ENCODE measurements at regions of chr3 and their contacts with region 1.

Region 1: DNA sequence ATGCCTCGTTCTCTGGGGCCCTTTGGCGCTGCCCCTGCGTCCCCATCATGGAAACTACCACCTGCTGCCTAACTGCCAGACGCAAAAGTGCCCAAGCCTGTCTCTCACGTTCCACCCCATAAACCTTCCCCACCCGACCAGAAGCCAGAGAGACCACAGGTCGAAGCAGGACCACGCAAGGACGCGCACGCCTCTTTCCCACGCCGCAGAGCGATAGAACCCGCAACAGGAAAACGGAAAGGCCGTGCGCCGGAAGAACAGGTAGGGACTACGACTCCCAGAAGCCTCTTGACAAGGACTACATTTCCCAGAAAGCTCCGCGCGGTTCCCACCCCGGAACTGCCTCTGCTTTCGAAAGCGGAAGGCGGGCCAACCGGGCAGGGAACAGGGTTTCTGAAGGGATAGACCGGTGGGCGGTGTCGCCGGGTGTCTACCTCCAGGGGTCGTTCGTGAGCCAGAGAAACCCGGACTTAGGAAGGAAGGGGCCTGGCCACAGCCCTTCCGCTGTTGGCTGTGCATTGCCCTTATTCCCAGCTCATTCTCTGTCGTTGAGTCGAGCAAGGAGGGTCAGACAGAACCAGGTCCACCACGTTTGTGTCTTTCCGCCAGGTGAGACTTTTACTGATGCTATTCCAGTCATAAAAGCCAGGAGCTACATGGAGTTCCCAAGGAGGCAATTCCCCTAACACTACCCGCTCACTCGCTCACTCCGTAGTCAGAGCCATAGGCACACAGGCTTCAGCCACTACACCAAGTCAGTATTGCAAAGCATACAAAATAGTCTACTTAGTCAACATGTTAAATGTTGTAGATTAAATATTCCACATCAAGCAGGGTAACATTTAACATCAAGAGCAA is 56.6 kb upstream of the ZBTB38 start:
- DNase-seq: peak; percentile 97
- ATAC-seq: peak; percentile 98
- H3K4me3 ChIP-seq: peak overlapping the region; percentile 71 to 96 (median 93)
- H3K4me3 Mint-ChIP-seq: peak overlapping the region; percentile 98
- H3K27ac ChIP-seq: peak overlapping the region; percentile 65 to 78
- H3K27ac Mint-ChIP-seq: peak overlapping the region; percentile 97
- H3K4me1 ChIP-seq: peaks cover 15 to 17% of the 10 kb centered on the region in 2 donors
- H3K4me1 Mint-ChIP-seq: peaks cover 23% of the 10 kb centered on the region
- H3K27me3 ChIP-seq: no peaks in the 10 kb centered on the region
- H3K27me3 Mint-ChIP-seq: no peaks in the 10 kb centered on the region
- CTCF ChIP-seq: peak; percentile 72

Region 2: GRCh38 chr3:141231101-141231935 is 80.4 kb before region 1 on chr3 and contains the start of gene PXYLP1:
- CTCF ChIA-PET with region 1: interaction called, 11 read pairs
- POLR2A ChIA-PET with region 1: interaction called, 4 read pairs
- intact Hi-C with region 1: loop called (anchors 2 kb)
- DNase-seq: peak; percentile 90
- ATAC-seq: peak; percentile 96
- H3K4me3 ChIP-seq: peak within 1 kb of the TSS; percentile 61 to 94 (median 71)
- H3K4me3 Mint-ChIP-seq: peak within 1 kb of the TSS; percentile 95
- H3K27ac ChIP-seq: peak within 1 kb of the TSS; percentile 67 to 80
- H3K27ac Mint-ChIP-seq: peak within 1 kb of the TSS; percentile 97
- H3K4me1 ChIP-seq: peaks cover 9 to 16% of the 10 kb centered on the region in 2 donors
- H3K4me1 Mint-ChIP-seq: peaks cover 18% of the 10 kb centered on the region
- H3K27me3 ChIP-seq: peaks cover 0 to 4% (median 0%) of the 10 kb centered on the region in 4 experiments
- H3K27me3 Mint-ChIP-seq: no peaks in the 10 kb centered on the region
- CTCF ChIP-seq: peak; percentile 69
- total RNA-seq, gene PXYLP1: 4.5 and 5.4 TPM in 2 replicates

Region 3: DNA sequence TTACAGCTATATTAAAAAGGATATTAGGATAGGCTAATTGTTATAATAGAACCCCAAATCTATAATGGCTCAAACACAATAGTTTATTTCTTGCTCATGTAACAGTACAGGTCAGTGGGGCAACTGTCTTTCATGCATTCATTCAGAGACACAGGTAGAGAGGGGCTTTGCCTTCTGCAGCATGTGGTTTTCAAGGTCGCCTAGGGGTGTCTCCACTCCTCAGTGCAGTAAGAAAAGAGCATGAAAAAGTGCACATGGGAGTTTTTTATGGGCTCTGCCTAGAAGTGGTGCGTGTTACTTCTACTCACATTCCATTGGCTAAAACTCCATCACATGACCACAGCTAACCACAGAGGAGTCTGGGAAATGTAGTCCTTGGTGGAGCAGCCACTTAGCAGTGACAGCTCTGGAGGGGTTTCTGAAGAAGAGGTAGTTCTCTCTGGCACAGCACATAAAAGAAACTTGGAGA is 58.4 kb after region 1 on chr3:
- CTCF ChIA-PET with region 1: interaction called, 7 read pairs
- POLR2A ChIA-PET with region 1: no interaction called
- intact Hi-C with region 1: loop called (anchors 1 kb)
- DNase-seq: peak; percentile 91
- ATAC-seq: peak; percentile 98
- H3K4me3 ChIP-seq: no peak overlapping the region
- H3K4me3 Mint-ChIP-seq: peak overlapping the region; percentile 5
- H3K27ac ChIP-seq: peak overlapping the region in 1 of 2 donors; percentile 42
- H3K27ac Mint-ChIP-seq: peak overlapping the region; percentile 62
- H3K4me1 ChIP-seq: peaks cover 4 to 8% of the 10 kb centered on the region in 2 donors
- H3K4me1 Mint-ChIP-seq: peaks cover 20% of the 10 kb centered on the region
- H3K27me3 ChIP-seq: no peaks in the 10 kb centered on the region
- H3K27me3 Mint-ChIP-seq: no peaks in the 10 kb centered on the region
- CTCF ChIP-seq: peak; percentile 69

Region 4: DNA sequence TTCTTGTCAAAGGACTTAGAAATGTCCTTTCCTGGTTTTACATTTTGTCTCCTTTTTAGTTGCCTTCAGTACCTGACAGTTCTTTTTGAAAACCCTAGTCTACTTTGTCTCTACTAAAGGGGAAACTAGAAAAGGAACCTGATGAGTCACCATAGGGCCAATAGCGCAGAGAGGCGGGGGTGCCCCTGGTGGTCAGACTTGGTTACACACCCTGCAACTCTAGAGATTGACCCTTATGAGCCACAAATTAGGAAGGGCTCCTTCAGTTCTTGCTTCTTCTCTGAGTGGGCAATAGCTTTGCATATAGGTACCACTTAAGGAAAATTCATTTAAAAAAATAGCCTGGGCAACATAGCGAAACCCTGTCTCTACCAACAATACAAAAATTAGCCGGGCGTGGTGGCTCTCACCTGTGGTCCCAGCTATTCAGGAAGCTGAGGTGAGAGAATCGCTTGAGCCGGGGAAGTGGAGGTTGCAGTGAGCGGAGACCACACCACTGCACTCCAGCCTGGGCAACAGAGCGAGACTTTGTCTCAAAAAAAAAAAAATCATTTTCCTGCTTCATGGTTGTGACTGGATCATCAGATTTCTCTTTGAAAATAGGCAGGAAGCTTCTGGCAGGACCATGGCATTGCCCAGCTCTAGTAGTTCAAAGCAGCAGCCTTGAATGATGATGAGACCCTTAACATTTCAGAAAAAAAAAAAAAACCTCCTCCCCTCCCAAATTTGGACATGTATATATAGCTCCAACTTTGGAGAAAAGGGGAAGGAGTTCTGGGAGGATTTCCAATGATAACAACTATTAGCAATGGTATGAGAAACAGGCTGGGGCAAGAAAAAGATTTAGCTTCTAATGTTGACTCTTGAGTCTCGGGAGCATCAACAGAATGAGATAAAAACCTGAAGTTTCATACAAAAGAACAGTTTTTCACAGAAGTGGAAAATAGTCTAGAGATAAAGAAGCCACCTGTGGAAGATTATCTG is 129.9 kb after region 1 on chr3:
- CTCF ChIA-PET with region 1: interaction called, 30 read pairs
- POLR2A ChIA-PET with region 1: interaction called, 4 read pairs
- intact Hi-C with region 1: no loop called
- DNase-seq: peak; percentile 83
- ATAC-seq: peak; percentile 99
- H3K4me3 ChIP-seq: no peak overlapping the region
- H3K4me3 Mint-ChIP-seq: peak overlapping the region; percentile 45
- H3K27ac ChIP-seq: no peak overlapping the region
- H3K27ac Mint-ChIP-seq: peak overlapping the region; percentile 51
- H3K4me1 ChIP-seq: peaks cover 10 to 15% of the 10 kb centered on the region in 2 donors
- H3K4me1 Mint-ChIP-seq: peaks cover 24% of the 10 kb centered on the region
- H3K27me3 ChIP-seq: no peaks in the 10 kb centered on the region
- H3K27me3 Mint-ChIP-seq: no peaks in the 10 kb centered on the region
- CTCF ChIP-seq: peak; percentile 90

Region 5: GRCh38 chr3:141487521-141488252 is 176.0 kb after region 1 on chr3:
- CTCF ChIA-PET with region 1: interaction called, 5 read pairs
- POLR2A ChIA-PET with region 1: interaction called, 6 read pairs
- intact Hi-C with region 1: loop called (anchors 1 kb)
- DNase-seq: peak; percentile 91
- ATAC-seq: peak; percentile 70
- H3K4me3 ChIP-seq: peak overlapping the region; percentile 48 to 96 (median 67)
- H3K4me3 Mint-ChIP-seq: peak overlapping the region; percentile 88
- H3K27ac ChIP-seq: peak overlapping the region; percentile 83 to 91
- H3K27ac Mint-ChIP-seq: peak overlapping the region; percentile 93
- H3K4me1 ChIP-seq: peaks cover 45 to 66% of the 10 kb centered on the region in 2 donors
- H3K4me1 Mint-ChIP-seq: peaks cover 70% of the 10 kb centered on the region
- H3K27me3 ChIP-seq: no peaks in the 10 kb centered on the region
- H3K27me3 Mint-ChIP-seq: no peaks in the 10 kb centered on the region
- CTCF ChIP-seq: no peak

Region 6: DNA sequence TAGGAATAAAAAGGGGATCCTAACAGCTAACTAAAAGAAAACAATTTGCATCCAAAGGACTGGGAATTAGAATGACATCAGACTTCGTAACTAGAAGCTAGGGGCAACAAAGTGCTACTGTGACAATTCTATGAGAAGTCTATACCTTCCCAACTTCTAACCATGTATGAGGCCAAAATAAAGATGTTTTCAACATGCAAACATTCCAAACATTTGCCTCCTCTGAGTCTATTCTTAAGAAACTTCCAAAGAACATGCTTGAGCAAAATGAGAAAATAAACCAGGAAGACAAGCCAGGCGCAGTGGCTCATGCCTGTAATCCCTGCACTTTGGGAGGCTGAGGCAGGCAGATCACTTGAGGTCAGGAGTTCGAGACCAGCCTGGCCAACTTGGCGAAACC is 413.3 kb after region 1 on chr3:
- CTCF ChIA-PET with region 1: no interaction called
- POLR2A ChIA-PET with region 1: no interaction called
- intact Hi-C with region 1: no loop called
- DNase-seq: no peak
- ATAC-seq: no peak
- H3K4me3 ChIP-seq: no peak overlapping the region
- H3K4me3 Mint-ChIP-seq: no peak overlapping the region
- H3K27ac ChIP-seq: no peak overlapping the region
- H3K27ac Mint-ChIP-seq: no peak overlapping the region
- H3K4me1 ChIP-seq: no peaks in the 10 kb centered on the region
- H3K4me1 Mint-ChIP-seq: no peaks in the 10 kb centered on the region
- H3K27me3 ChIP-seq: peaks cover 0 to 3% (median 0%) of the 10 kb centered on the region in 4 experiments
- H3K27me3 Mint-ChIP-seq: peaks cover 14% of the 10 kb centered on the region
- CTCF ChIP-seq: no peak

Region 7: DNA sequence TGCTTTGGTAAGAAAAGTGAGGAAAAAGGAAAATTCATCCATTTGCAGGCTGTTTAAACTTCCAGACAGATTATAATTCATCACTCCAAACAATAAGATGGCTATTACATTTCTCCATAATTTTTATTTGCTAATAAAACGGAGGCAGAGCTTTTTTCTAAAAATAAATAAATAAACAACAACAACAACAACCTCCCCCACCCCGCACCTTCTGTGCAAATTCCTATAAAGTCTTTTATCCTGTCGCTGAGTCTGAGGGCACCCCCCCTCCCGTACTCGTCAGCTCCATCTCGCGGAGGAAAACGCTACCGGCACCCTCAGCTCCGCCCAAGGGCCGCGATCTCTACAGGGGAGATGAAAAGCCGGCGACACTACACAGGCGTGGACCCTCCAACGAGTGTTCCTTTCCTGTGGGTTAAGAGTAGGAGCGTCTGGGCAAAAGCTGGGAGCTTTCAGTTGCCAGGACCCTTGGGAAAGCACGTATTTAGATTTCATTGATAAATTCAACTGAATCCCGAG is 563.7 kb after region 1 on chr3:
- CTCF ChIA-PET with region 1: interaction called, 3 read pairs
- POLR2A ChIA-PET with region 1: no interaction called
- intact Hi-C with region 1: loop called (anchors 2 kb)
- DNase-seq: peak; percentile 87
- ATAC-seq: peak; percentile 63
- H3K4me3 ChIP-seq: peak overlapping the region; percentile 74 to 89 (median 79)
- H3K4me3 Mint-ChIP-seq: peak overlapping the region; percentile 90
- H3K27ac ChIP-seq: peak overlapping the region; percentile 90 to 98
- H3K27ac Mint-ChIP-seq: peak overlapping the region; percentile 90
- H3K4me1 ChIP-seq: peaks cover 8 to 15% of the 10 kb centered on the region in 2 donors
- H3K4me1 Mint-ChIP-seq: peaks cover 28% of the 10 kb centered on the region
- H3K27me3 ChIP-seq: no peaks in the 10 kb centered on the region
- H3K27me3 Mint-ChIP-seq: no peaks in the 10 kb centered on the region
- CTCF ChIP-seq: peak; percentile 90

Region 8: DNA sequence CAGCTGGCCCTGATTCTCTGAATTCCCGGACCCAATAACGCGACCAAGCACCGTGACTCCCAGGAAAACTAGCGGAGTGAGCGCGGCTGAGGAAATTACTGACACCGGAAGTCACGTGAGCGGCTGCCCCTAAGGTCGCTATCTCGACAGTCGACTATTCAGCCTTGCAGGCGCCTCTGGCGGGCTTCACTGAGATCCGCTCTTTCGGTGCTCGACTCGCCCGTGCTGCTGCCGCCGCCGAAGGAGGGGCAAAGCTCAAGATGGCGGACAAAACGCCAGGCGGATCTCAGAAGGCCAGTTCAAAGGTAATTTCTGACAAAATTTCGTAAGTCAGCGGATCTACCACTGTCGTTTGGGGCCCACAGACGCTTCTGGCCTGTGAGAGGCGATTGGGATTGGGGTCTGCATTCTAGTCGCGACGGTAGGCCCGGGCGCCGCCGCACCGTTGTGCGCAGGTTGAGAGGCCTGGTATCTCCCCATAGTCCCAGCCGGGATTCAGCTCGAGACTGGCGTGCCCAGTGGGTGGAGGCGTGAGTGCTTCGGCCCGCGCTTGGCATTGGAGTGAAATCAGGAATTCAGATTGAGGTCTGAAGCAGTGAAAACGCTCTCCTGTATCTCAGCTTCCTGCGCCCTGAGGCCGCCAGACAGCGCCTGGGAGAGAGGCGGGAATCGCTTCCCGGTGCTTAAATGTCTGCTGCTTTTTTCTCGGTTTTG is 1689.8 kb after region 1 on chr3 and contains the start of gene U2SURP:
- CTCF ChIA-PET with region 1: no interaction called
- POLR2A ChIA-PET with region 1: no interaction called
- intact Hi-C with region 1: loop called (anchors 5 kb)
- DNase-seq: peak; percentile 95
- ATAC-seq: peak; percentile 96
- H3K4me3 ChIP-seq: peak within 1 kb of the TSS; percentile 73 to 100 (median 97)
- H3K4me3 Mint-ChIP-seq: peak within 1 kb of the TSS; percentile 96
- H3K27ac ChIP-seq: peak within 1 kb of the TSS; percentile 86 to 98
- H3K27ac Mint-ChIP-seq: peak within 1 kb of the TSS; percentile 96
- H3K4me1 ChIP-seq: peaks cover 19 to 20% of the 10 kb centered on the region in 2 donors
- H3K4me1 Mint-ChIP-seq: peaks cover 34% of the 10 kb centered on the region
- H3K27me3 ChIP-seq: no peaks in the 10 kb centered on the region
- H3K27me3 Mint-ChIP-seq: no peaks in the 10 kb centered on the region
- CTCF ChIP-seq: no peak
- total RNA-seq, gene U2SURP: 138 and 169 TPM in 2 replicates